Activated T-helper 1 cell treated with anti-CD3 and anti-CD28 coated beads, Interleukin-12 subunit alpha, Interleukin-12 subunit beta, Interleukin-2, Interleukin-4 antibody, amounts not matched to agents 30 ng/mL and 10 ng/mL and 1 ng/mL, durations not matched to agents 14 hours and 24 hours and 36 hours (primary cell): ENCODE measurements at regions of chr17 and their contacts with region 1.

Region 1: GRCh38 chr17:41403798-41404671 is 6.6 kb upstream of the KRT31 start:
- DNase-seq: peak; percentile 3
- H3K4me3 Mint-ChIP-seq: peak overlapping the region; percentile 27
- H3K27ac Mint-ChIP-seq: peak overlapping the region; percentile 77
- H3K4me1 Mint-ChIP-seq: peaks cover 30% of the 10 kb centered on the region
- H3K27me3 Mint-ChIP-seq: no peaks in the 10 kb centered on the region

Region 2: GRCh38 chr17:41338961-41339485 is 65.0 kb before region 1 on chr17:
- intact Hi-C with region 1: loop called (anchors 1 kb)
- DNase-seq: peak; percentile 36
- H3K4me3 Mint-ChIP-seq: peak overlapping the region; percentile 43
- H3K27ac Mint-ChIP-seq: peak overlapping the region; percentile 52
- H3K4me1 Mint-ChIP-seq: peaks cover 52% of the 10 kb centered on the region
- H3K27me3 Mint-ChIP-seq: peaks cover 16% of the 10 kb centered on the region